Mammary epithelial cell (primary cell): ENCODE measurements at regions of chr6 and their contacts with region 1.

Region 1: GRCh38 chr6:20056350-20056992 is 155.8 kb downstream of the MBOAT1 start:
- DNase-seq: peak; percentile 19
- H3K4me3 ChIP-seq: no peak overlapping the region
- H3K27ac ChIP-seq: no peak overlapping the region
- H3K4me1 ChIP-seq: no peaks in the 10 kb centered on the region
- H3K27me3 ChIP-seq: no peaks in the 10 kb centered on the region
- CTCF ChIP-seq: peak; percentile 64 to 67

Region 2: DNA sequence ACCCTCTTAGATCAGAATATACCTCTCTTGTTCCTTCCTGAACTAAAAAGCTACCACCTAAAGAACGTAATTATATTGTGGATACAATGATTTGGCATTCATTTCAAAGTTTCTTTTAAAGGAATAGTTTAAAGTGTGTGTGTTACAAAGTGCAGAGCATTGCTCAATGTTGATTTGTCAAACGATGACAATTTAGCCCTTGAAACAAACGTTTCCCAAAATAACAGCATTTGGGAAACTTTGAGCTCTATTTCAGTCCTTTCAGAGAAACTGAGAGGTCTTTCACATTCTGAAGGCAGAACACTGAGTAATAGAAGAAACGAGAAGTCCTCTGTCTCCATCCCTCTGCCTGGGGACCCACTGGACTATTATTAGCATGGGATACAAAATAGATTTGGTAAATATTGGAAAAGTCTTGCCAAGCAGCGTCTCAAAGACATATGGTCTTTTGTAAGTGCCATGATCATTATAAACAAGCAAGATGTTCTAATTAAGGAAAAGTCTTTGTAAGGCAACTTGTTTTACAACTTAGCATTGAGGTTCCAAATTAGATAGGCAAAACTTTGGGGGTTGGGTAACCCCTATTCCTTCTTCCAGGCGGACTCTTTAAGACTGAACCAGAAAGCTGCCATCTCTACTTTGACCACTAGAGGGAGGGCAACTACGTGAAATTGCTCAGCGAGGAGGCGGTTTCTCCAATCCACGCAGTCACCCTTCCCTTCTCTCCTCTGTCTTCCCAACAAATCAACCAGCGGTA is 1460.5 kb before region 1 on chr6:
- CTCF ChIA-PET with region 1: no interaction called
- dilution Hi-C with region 1: no loop called
- in situ Hi-C with region 1: no loop called
- intact Hi-C with region 1: loop called (anchors 5 kb)
- DNase-seq: peak; percentile 36
- H3K4me3 ChIP-seq: no peak overlapping the region
- H3K27ac ChIP-seq: no peak overlapping the region
- H3K4me1 ChIP-seq: no peaks in the 10 kb centered on the region
- H3K27me3 ChIP-seq: no peaks in the 10 kb centered on the region
- CTCF ChIP-seq: peak; percentile 94 to 97

Region 3: DNA sequence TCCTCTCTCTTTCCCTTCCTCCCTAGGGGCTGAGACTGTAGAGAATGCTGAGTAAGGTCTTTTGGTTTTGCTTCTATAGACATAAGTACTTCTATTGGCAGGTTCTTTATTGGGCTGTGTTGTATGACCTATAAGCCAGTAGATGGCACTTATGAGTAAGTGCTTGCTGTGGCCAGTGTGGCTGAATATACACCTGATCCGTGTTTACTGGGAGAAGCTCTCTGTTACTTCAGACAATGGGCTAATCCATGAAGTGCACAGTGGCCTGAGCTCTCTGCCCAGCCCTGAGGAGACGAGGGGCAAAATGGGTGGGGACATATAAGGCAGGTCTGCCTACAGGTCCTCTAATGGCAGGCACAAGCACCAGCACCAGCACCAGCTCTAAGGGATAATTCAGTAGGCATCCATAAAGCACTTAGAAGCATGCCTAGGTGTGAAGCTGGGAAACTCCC is 1059.1 kb before region 1 on chr6:
- CTCF ChIA-PET with region 1: no interaction called
- dilution Hi-C with region 1: no loop called
- in situ Hi-C with region 1: loop called (anchors 25 kb)
- intact Hi-C with region 1: loop called (anchors 1 kb)
- DNase-seq: peak; percentile 40
- H3K4me3 ChIP-seq: no peak overlapping the region
- H3K27ac ChIP-seq: no peak overlapping the region
- H3K4me1 ChIP-seq: no peaks in the 10 kb centered on the region
- H3K27me3 ChIP-seq: no peaks in the 10 kb centered on the region
- CTCF ChIP-seq: peak; percentile 64 to 80

Region 4: DNA sequence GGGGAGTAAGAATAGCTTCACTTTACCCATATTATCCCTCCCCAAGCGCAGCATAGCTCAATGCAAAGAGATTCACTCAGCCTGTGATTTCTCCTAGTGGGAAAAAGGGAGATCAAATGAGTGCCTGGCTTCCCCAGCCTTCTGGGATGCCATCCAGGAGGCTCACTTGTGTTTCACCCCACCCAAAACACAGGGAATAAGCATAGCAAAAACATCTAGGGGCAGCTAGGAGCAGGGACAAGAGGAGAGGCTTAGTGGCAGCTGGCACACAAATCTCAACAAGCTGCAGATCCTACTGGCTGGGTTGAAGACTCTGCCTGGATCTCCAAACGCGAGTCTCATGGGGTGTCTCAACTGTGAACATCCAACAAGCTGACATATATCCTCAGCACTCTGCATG is 953.5 kb before region 1 on chr6:
- CTCF ChIA-PET with region 1: no interaction called
- dilution Hi-C with region 1: no loop called
- in situ Hi-C with region 1: no loop called
- intact Hi-C with region 1: loop called (anchors 5 kb)
- DNase-seq: no peak
- H3K4me3 ChIP-seq: no peak overlapping the region
- H3K27ac ChIP-seq: no peak overlapping the region
- H3K4me1 ChIP-seq: no peaks in the 10 kb centered on the region
- H3K27me3 ChIP-seq: no peaks in the 10 kb centered on the region
- CTCF ChIP-seq: no peak

Region 5: GRCh38 chr6:19812512-19813119 is 243.9 kb before region 1 on chr6:
- CTCF ChIA-PET with region 1: no interaction called
- dilution Hi-C with region 1: no loop called
- in situ Hi-C with region 1: no loop called
- intact Hi-C with region 1: loop called (anchors 2 kb)
- DNase-seq: peak; percentile 8
- H3K4me3 ChIP-seq: no peak overlapping the region
- H3K27ac ChIP-seq: no peak overlapping the region
- H3K4me1 ChIP-seq: no peaks in the 10 kb centered on the region
- H3K27me3 ChIP-seq: no peaks in the 10 kb centered on the region
- CTCF ChIP-seq: peak; percentile 58 to 78

Region 6: DNA sequence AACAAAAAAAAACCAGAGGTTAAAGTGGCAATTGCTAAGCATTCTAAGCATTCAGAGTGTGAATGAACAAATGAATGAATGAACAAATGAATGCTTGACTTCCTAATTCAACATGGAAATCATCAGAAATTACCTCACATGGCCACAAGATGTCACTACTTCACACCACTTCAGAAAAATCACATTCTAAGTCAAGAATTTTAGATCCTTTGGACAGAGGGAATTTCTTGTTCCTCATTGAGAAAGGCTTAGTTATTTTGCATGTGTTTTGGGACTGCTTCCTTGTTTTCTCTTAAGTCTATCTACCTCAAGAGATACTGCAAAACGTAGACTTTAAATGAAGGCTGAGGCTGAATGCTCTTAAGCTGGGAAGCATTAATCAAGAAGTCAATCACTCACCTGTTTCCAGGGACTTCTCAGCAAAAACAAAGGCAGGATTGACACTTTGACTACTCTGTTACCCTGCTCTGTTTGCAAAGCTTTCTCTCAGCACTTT is 35.6 kb after region 1 on chr6:
- CTCF ChIA-PET with region 1: no interaction called
- dilution Hi-C with region 1: no loop called
- in situ Hi-C with region 1: no loop called
- intact Hi-C with region 1: no loop called
- DNase-seq: peak; percentile 37
- H3K4me3 ChIP-seq: no peak overlapping the region
- H3K27ac ChIP-seq: no peak overlapping the region
- H3K4me1 ChIP-seq: no peaks in the 10 kb centered on the region
- H3K27me3 ChIP-seq: no peaks in the 10 kb centered on the region
- CTCF ChIP-seq: peak; percentile 53 to 62